ENCODE measurements at regions of chr3 and their contacts with region 1.

Region 1: GRCh38 chr3:138747225-138747624 is 87.5 kb downstream of the PIK3CB start:
- DNase-seq: no peak
- H3K4me3 ChIP-seq: no peak overlapping the region
- H3K27ac ChIP-seq: no peak overlapping the region
- H3K4me1 ChIP-seq: no peaks in the 10 kb centered on the region
- H3K27me3 ChIP-seq: no peaks in the 10 kb centered on the region
- CTCF ChIP-seq: no peak
- EP300 ChIP-seq: no peak
- POLR2A ChIP-seq: no peak

Region 2: GRCh38 chr3:138493804-138494606 is 253.2 kb before region 1 on chr3:
- in situ Hi-C with region 1: no loop called
- intact Hi-C with region 1: no loop called
- DNase-seq: no peak
- H3K4me3 ChIP-seq: no peak overlapping the region
- H3K27ac ChIP-seq: peak overlapping the region in 1 of 4 donors; percentile 24
- H3K4me1 ChIP-seq: peaks cover 0 to 6% (median 0%) of the 10 kb centered on the region in 4 donors
- H3K27me3 ChIP-seq: no peaks in the 10 kb centered on the region
- CTCF ChIP-seq: no peak
- EP300 ChIP-seq: no peak
- POLR2A ChIP-seq: no peak

Region 3: GRCh38 chr3:138717348-138717747 is 29.9 kb before region 1 on chr3:
- in situ Hi-C with region 1: no loop called
- intact Hi-C with region 1: no loop called
- DNase-seq: no peak
- H3K4me3 ChIP-seq: no peak overlapping the region
- H3K27ac ChIP-seq: no peak overlapping the region
- H3K4me1 ChIP-seq: no peaks in the 10 kb centered on the region
- H3K27me3 ChIP-seq: no peaks in the 10 kb centered on the region
- CTCF ChIP-seq: no peak
- EP300 ChIP-seq: no peak
- POLR2A ChIP-seq: no peak

Region 4: GRCh38 chr3:138729279-138729678 is 17.9 kb before region 1 on chr3:
- in situ Hi-C with region 1: no loop called
- intact Hi-C with region 1: no loop called
- DNase-seq: no peak
- H3K4me3 ChIP-seq: no peak overlapping the region
- H3K27ac ChIP-seq: no peak overlapping the region
- H3K4me1 ChIP-seq: no peaks in the 10 kb centered on the region
- H3K27me3 ChIP-seq: no peaks in the 10 kb centered on the region
- CTCF ChIP-seq: no peak
- EP300 ChIP-seq: no peak
- POLR2A ChIP-seq: no peak

Region 5: GRCh38 chr3:138781012-138781470 is 33.8 kb after region 1 on chr3:
- in situ Hi-C with region 1: no loop called
- intact Hi-C with region 1: loop called (anchors 1 kb)
- DNase-seq: no peak
- H3K4me3 ChIP-seq: no peak overlapping the region
- H3K27ac ChIP-seq: no peak overlapping the region
- H3K4me1 ChIP-seq: peaks cover 0 to 2% (median 0%) of the 10 kb centered on the region in 4 donors
- H3K27me3 ChIP-seq: no peaks in the 10 kb centered on the region
- CTCF ChIP-seq: no peak
- EP300 ChIP-seq: no peak
- POLR2A ChIP-seq: no peak